ENCODE measurements at regions of chr2 and their contacts with region 1.

Region 1: GRCh38 chr2:201118121-201118960 is 2.4 kb downstream of the CFLAR start:
- DNase-seq: peak; percentile 98
- H3K4me3 Mint-ChIP-seq: peak overlapping the region; percentile 93
- H3K27ac Mint-ChIP-seq: peak overlapping the region; percentile 98
- H3K4me1 Mint-ChIP-seq: peaks cover 31% of the 10 kb centered on the region
- H3K27me3 Mint-ChIP-seq: no peaks in the 10 kb centered on the region
- CTCF ChIP-seq: peak; percentile 36

Region 2: DNA sequence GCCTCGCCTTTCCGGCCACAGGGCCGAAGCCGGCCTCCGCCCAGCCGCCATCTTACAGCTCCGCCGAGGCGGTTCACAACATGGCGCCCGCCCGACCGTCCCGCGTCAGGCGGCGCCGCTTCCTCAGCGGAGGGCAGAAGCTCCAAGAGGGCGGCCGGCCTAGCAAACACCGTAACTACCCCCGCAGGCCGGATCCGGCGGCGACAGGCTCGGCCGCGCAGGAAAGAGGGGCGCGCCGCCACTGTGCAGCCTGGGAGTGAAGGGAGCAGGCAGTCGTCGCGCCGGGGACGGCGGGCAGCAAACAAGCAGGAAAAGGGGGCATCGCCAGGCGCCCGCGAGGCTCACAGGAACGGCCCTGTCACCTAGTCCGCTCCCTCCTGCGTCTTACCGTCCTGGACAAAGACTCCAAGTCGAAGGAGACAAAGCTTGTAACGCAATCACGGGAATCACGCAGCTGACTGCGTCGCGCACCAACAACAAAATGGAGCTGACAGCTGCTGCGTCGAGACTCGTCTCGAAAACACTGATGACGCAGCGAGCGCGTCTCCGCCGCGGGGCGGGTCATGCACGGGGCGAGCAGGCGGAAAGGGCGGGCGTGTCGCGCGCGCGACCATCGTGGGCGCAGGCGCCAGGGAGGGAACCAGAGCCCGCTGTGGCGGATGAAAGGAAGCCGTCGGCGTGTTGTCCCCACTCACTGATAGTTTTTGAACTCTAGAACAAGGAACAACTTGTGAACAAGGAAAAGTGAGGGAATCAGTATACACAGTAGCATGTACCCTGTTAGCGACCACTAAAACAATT is 254.0 kb before region 1 on chr2 and contains the start of gene CLK1:
- CTCF ChIA-PET with region 1: no interaction called
- POLR2A ChIA-PET with region 1: interaction called, 35 read pairs
- intact Hi-C with region 1: no loop called
- DNase-seq: peak; percentile 91
- H3K4me3 Mint-ChIP-seq: peak within 1 kb of the TSS; percentile 86
- H3K27ac Mint-ChIP-seq: peak within 1 kb of the TSS; percentile 99
- H3K4me1 Mint-ChIP-seq: peaks cover 16% of the 10 kb centered on the region
- H3K27me3 Mint-ChIP-seq: no peaks in the 10 kb centered on the region
- CTCF ChIP-seq: no peak
- total RNA-seq, gene CLK1: 102 and 118 TPM in 2 replicates

Region 3: DNA sequence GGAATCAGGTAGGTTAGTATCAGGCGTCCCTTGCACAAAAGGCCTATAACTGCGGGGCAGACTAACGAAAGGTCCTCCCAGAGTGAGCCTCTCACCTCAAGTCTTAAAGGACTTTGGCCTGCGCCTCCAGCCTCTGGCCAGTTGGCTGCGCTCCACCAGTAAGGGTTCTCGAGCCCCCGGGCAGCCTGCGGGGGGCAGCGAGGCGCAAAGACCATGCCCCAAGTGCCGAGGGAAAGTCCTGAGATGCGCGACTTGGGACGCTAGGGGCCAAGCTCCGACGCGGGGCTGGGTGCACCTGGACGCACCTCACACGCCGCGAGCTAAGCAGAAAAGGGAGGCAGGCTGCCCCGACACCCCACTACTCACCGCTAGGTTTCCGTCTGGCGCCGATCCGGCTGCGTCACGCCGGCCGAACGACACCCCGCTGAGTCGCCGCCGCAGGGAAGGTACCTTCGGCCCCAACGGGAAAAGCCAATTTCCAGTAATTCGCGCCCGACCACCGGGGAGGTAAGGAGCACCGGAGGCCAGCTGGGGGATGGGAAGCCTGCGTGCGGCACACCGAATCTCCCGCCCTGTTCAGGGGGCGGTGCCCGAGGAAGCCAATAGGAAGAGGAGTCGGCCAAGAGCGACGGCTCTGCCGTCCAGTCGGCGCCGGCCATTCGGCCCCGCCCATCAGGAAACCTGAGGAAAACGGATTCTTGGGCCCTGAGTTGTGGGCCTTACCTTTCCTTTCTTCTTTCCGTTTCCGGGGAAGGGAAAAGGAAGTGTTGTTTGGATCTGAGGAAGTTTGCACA is 155.0 kb before region 1 on chr2 and contains the start of gene ORC2:
- CTCF ChIA-PET with region 1: interaction called, 5 read pairs
- POLR2A ChIA-PET with region 1: interaction called, 86 read pairs
- intact Hi-C with region 1: no loop called
- DNase-seq: peak; percentile 96
- H3K4me3 Mint-ChIP-seq: peak within 1 kb of the TSS; percentile 86
- H3K27ac Mint-ChIP-seq: peak within 1 kb of the TSS; percentile 76
- H3K4me1 Mint-ChIP-seq: peaks cover 52% of the 10 kb centered on the region
- H3K27me3 Mint-ChIP-seq: no peaks in the 10 kb centered on the region
- CTCF ChIP-seq: peak; percentile 61
- total RNA-seq, gene ORC2: 51.5 and 54.4 TPM in 2 replicates

Region 4: DNA sequence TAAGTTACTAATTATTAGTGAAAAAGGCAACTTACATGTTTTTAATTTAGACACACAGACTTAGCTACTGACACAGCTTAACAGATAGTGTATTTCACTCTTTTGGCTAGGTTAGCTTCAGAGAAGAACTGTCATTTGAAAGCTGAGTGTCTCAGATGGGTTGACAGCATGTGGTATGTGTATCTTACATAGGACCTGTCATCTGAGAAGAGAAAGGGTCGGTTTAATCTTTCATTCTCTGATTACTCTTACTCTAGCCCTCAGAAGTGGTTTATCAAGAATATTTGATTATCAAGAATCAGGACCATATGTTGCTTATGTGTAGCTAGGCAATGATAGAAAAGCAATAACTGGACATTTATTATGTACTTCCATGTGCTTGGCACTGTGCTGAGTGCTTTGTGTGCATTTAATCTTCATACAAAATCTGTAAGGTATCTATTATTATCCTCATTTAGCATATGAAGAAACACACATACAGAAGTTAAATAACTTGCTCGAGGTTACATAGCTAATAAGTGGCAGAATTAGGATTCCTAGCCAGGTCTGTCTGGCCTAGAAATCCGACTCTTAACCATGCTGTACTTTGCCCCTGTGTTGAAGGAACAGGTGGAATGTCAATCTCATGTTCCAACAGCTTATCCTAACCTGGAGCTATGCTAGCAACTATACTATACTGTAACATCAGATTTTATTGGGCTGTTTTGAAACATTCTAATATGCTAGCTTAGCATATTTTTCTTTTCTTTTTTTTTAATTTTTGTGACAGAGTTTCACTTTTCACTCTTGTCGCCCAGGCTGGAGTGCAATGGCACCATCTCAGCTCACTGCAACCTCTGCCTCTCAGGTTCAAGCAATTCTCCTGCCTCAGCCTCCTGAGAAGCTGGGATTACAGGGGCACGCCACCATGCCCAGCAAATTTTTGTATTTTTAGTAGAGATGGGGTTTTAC is 26.0 kb after region 1 on chr2:
- CTCF ChIA-PET with region 1: interaction called, 13 read pairs
- POLR2A ChIA-PET with region 1: interaction called, 198 read pairs
- intact Hi-C with region 1: no loop called
- DNase-seq: no peak
- H3K4me3 Mint-ChIP-seq: no peak overlapping the region
- H3K27ac Mint-ChIP-seq: no peak overlapping the region
- H3K4me1 Mint-ChIP-seq: peaks cover 14% of the 10 kb centered on the region
- H3K27me3 Mint-ChIP-seq: no peaks in the 10 kb centered on the region
- CTCF ChIP-seq: no peak

Region 5: GRCh38 chr2:201158111-201158929 is 40.0 kb after region 1 on chr2:
- CTCF ChIA-PET with region 1: interaction called, 46 read pairs
- POLR2A ChIA-PET with region 1: interaction called, 198 read pairs
- intact Hi-C with region 1: loop called (anchors 1 kb)
- DNase-seq: peak; percentile 87
- H3K4me3 Mint-ChIP-seq: no peak overlapping the region
- H3K27ac Mint-ChIP-seq: peak overlapping the region; percentile 69
- H3K4me1 Mint-ChIP-seq: peaks cover 8% of the 10 kb centered on the region
- H3K27me3 Mint-ChIP-seq: no peaks in the 10 kb centered on the region
- CTCF ChIP-seq: peak; percentile 62

Region 6: DNA sequence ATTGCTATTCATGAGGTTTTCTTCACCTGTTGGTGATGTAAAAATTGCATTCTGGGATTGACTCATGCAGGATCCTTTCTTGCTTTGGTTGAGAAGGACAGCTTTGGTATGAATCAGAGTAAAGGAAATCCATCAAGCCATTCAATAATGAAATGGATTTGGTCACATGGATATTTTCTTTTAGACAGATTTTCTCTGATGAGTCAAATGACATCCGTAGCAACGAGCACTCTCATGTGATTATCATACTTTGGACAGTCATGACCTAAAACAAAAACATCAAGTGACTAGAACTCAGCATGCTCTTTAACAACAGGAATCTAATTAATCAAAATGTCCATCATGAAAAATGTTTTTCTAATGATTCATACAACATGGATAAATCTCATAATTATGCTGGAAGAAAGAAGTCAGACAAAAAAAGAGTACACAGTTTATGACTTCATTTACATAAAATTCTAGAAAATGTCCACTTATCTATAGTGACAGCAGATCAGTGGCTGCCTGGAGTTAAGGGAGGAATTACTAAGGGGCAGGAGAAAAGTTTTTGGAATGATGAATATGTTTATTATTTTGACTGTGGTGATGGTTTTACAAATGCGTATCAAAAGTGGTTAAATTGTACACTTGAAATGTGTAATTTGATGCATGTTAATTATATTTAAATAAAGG is 302.2 kb after region 1 on chr2:
- CTCF ChIA-PET with region 1: no interaction called
- POLR2A ChIA-PET with region 1: no interaction called
- intact Hi-C with region 1: no loop called
- DNase-seq: no peak
- H3K4me3 Mint-ChIP-seq: no peak overlapping the region
- H3K27ac Mint-ChIP-seq: peak overlapping the region; percentile 69
- H3K4me1 Mint-ChIP-seq: peaks cover 30% of the 10 kb centered on the region
- H3K27me3 Mint-ChIP-seq: no peaks in the 10 kb centered on the region
- CTCF ChIP-seq: no peak